A673 (cell line): ENCODE measurements at regions of chr18 and their contacts with region 1.

Region 1: GRCh38 chr18:63963615-63964256 is 6.1 kb upstream of the SERPINB8 start:
- DNase-seq: peak; percentile 73
- H3K4me3 ChIP-seq: no peak overlapping the region
- H3K27ac ChIP-seq: no peak overlapping the region
- H3K4me1 ChIP-seq: peaks cover 3% of the 10 kb centered on the region
- H3K27me3 ChIP-seq: no peaks in the 10 kb centered on the region
- CTCF ChIP-seq: peak; percentile 87

Region 2: DNA sequence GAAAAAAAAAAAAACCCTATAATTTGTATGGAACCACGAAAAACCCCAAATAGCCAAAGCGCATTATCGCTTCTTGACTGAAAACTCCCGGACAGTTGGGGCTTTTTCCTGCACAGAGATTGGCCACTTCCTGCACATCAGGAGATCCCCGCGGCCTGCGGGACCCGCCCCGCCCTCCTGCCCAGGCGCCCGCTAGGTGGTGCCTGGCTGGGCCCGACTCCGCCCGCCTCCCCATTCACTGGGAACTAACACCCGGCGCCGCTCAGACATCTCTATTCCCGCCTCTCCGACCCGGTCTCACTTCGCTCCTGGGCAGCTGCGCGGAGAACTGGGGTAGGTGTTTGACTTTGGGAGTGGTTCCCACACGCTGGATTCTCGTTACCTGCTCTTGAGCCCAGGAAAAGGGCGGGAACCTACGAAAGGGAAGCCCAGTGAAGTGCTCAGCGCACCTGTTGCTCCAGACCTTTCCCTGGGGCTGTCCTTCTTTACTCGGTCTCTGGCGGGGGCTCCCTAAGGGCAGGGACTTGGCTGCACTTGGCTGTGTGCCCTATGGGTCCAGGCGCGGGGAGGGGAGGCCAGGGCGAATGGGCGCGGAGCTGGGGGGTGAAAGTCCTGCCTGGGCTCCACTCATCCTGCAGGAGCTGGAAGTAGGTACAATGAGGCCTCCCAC is 14.5 kb before region 1 on chr18 and contains the start of gene HMSD:
- CTCF ChIA-PET with region 1: interaction called, 5 read pairs
- POLR2A ChIA-PET with region 1: no interaction called
- intact Hi-C with region 1: loop called (anchors 2 kb)
- DNase-seq: peak; percentile 88
- H3K4me3 ChIP-seq: peak within 1 kb of the TSS; percentile 67
- H3K27ac ChIP-seq: peak within 1 kb of the TSS; percentile 86
- H3K4me1 ChIP-seq: peaks cover 10% of the 10 kb centered on the region
- H3K27me3 ChIP-seq: no peaks in the 10 kb centered on the region
- CTCF ChIP-seq: peak; percentile 58
- total RNA-seq, gene HMSD: 31.6 and 58.1 TPM in 2 replicates